ENCODE measurements at regions of chr3 and their contacts with region 1.

Region 1: GRCh38 chr3:149808209-149808829 is 4.7 kb upstream of the RNF13 start:
- DNase-seq: peak; percentile 69
- ATAC-seq: peak in 1 of 2 donors; percentile 13

Region 2: DNA sequence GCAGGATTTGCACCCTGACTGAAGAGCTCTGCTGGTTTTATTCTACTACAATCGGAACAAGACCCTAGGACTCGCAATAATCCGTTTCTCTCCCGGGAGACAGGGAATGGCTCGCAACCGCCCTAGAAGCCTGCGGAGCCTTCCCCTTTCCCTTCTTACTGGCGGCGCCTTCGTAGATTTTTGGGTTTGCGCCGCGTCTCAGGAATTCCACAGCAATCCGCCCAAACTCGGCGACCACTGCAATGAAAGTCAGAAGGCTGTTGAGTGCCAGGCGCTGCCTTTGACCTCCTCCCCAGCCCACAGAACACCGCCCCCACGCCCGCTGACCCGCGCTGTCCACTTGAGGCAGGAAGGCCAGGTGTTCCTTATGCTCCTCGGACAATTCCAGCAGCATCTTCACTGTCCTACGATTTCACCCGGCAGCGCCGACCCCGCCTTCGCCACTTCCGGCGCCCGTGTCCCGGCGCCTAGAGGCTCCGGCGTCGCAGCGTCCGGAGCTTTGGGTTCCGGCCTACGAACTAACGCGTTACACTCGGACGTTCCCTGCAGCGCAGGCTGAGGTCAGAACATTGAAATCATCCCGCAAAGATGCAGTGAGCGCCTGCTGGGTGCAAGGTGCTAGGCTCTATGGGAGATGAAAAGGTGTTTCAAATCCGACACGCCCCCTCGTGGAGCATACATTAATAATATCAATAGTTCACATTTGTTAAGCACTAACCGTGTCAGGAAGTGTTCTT is 56.1 kb before region 1 on chr3 and contains the start of gene COMMD2:
- intact Hi-C with region 1: loop called in 1 of 2 experiments (anchors 2 kb)
- DNase-seq: peak; percentile 78
- ATAC-seq: peak; percentile 99
- total RNA-seq, gene COMMD2: 21.0 to 22.4 TPM

Region 3: GRCh38 chr3:149860881-149861280 is 52.6 kb after region 1 on chr3:
- intact Hi-C with region 1: no loop called
- DNase-seq: no peak
- ATAC-seq: no peak

Region 4: GRCh38 chr3:150319904-150320303 is 511.6 kb after region 1 on chr3:
- intact Hi-C with region 1: no loop called
- DNase-seq: no peak
- ATAC-seq: peak in 1 of 2 donors; percentile 79